ENCODE measurements at regions of chr3 and their contacts with region 1.

Region 1: DNA sequence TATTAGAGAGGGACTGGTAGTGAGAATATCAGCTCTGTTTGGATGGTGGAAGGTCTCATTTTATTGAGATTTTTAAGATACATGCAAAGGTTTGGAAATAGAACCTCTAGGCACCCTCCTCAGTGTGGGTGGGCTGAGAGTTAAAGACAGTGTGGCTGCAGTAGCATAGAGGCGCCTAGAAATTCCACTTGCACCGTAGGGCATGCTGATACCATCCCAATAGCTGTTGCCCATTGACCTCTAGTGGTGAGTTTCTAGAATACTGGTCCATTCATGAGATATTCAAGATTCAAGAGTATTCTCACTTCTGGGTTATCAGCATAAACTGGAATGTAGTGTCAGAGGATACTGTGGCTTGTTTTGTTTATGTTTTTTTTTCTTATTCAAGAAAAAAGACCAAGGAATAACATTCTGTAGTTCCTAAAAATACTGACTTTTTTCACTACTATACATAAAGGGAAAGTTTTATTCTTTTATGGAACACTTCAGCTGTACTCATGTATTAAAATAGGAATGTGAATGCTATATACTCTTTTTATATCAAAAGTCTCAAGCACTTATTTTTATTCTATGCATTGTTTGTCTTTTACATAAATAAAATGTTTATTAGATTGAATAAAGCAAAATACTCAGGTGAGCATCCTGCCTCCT is 87.2 kb downstream of the TGFBR2 start:
- DNase-seq: peak in 1 of 2 donors; percentile 59
- ATAC-seq: peak; percentile 76 to 88 (median 84)
- H3K4me3 ChIP-seq: no peak overlapping the region
- H3K27ac ChIP-seq: peak overlapping the region in 7 of 10 donors; percentile 8 to 64 (median 45)
- H3K4me1 ChIP-seq: peaks cover 11 to 94% (median 68%) of the 10 kb centered on the region in 9 donors
- H3K27me3 ChIP-seq: no peaks in the 10 kb centered on the region
- CTCF ChIP-seq: peak; percentile 70 to 90 (median 81)

Region 2: DNA sequence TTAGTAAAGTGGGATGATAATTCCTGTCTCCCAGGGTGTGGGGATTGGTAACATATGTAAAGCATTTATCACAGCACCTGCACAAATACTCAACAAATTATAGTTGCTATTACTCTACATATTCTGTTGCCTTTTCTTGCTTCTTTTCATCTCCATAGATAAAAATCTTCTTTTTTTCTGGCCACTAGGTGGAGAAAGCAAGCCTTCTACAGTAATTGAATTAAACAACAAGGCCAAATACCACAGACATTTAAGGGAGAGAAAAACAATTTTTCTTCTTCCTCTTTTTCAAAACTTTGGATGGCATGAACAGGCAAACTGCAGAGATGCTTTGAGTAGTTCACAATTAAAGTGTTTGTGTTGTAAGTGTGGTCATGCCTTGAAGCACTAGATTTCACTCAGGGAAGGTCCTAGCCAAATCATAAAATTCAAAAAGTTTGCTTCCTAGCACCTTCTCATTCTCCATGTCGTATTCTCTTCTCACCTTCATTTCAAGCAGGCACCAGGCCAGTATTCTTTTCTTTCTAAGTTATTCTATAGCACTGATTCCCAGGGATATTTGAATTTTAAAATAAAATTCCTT is 580.6 kb before region 1 on chr3:
- intact Hi-C with region 1: loop called (anchors 1 to 10 kb)
- DNase-seq: no peak
- ATAC-seq: peak in 5 of 8 donors; percentile 12 to 55 (median 44)
- H3K4me3 ChIP-seq: no peak overlapping the region
- H3K27ac ChIP-seq: no peak overlapping the region
- H3K4me1 ChIP-seq: peaks cover 0 to 20% (median 8%) of the 10 kb centered on the region in 9 donors
- H3K27me3 ChIP-seq: no peaks in the 10 kb centered on the region
- CTCF ChIP-seq: peak; percentile 42 to 81 (median 71)

Region 3: GRCh38 chr3:30292192-30292893 is 401.3 kb before region 1 on chr3:
- intact Hi-C with region 1: loop called in 2 of 10 experiments (anchors 5 to 10 kb)
- DNase-seq: no peak
- ATAC-seq: peak in 2 of 8 donors; percentile 51 to 54
- H3K4me3 ChIP-seq: no peak overlapping the region
- H3K27ac ChIP-seq: peak overlapping the region in 3 of 10 donors; percentile 10 to 70 (median 42)
- H3K4me1 ChIP-seq: peaks cover 0 to 49% (median 17%) of the 10 kb centered on the region in 9 donors
- H3K27me3 ChIP-seq: no peaks in the 10 kb centered on the region
- CTCF ChIP-seq: no peak

Region 4: DNA sequence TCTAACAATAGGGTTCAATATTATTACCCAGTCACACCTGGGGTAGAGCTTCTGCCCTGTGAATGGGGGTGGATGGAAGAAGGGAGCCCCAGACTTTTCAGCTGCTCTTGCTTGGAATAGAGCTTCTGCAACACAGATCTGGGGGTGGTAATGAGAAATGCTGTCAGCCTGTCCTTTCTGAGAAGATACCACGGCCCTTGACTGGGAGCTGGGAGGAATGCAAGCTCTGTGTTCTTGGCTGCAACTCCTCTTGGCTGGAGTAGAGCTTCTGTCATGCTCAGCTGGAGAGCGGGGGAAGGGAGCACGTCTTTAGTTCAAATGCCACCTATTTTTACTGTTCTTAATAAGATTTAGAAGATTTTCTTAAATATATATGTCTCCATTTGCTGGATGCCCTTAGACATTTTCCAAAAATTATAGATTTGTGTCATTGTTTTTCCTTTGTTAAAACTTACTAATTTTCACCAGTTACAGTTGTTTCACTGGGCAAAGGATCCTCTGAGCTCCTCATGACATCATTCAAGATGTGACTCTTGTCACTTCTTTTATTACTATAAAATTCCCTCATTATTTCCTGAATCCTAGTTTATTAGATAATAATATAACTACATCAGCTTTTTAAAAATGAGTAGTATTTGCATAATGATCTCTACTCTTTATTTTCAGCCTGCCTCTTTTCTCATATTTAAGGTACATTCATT is 267.2 kb before region 1 on chr3:
- intact Hi-C with region 1: loop called in 1 of 10 experiments (anchors 10 kb)
- DNase-seq: peak; percentile 26 to 85
- ATAC-seq: peak; percentile 98 to 100 (median 100)
- H3K4me3 ChIP-seq: no peak overlapping the region
- H3K27ac ChIP-seq: peak overlapping the region; percentile 36 to 85 (median 76)
- H3K4me1 ChIP-seq: peaks cover 0 to 21% (median 17%) of the 10 kb centered on the region in 9 donors
- H3K27me3 ChIP-seq: no peaks in the 10 kb centered on the region
- CTCF ChIP-seq: no peak

Region 5: GRCh38 chr3:30511524-30512278 is 181.9 kb before region 1 on chr3:
- intact Hi-C with region 1: loop called in 3 of 10 experiments (anchors 5 to 10 kb)
- DNase-seq: no peak
- ATAC-seq: peak; percentile 64 to 96 (median 83)
- H3K4me3 ChIP-seq: no peak overlapping the region
- H3K27ac ChIP-seq: peak overlapping the region in 8 of 10 donors; percentile 11 to 51 (median 30)
- H3K4me1 ChIP-seq: peaks cover 0 to 20% (median 0%) of the 10 kb centered on the region in 9 donors
- H3K27me3 ChIP-seq: no peaks in the 10 kb centered on the region
- CTCF ChIP-seq: no peak

Region 6: DNA sequence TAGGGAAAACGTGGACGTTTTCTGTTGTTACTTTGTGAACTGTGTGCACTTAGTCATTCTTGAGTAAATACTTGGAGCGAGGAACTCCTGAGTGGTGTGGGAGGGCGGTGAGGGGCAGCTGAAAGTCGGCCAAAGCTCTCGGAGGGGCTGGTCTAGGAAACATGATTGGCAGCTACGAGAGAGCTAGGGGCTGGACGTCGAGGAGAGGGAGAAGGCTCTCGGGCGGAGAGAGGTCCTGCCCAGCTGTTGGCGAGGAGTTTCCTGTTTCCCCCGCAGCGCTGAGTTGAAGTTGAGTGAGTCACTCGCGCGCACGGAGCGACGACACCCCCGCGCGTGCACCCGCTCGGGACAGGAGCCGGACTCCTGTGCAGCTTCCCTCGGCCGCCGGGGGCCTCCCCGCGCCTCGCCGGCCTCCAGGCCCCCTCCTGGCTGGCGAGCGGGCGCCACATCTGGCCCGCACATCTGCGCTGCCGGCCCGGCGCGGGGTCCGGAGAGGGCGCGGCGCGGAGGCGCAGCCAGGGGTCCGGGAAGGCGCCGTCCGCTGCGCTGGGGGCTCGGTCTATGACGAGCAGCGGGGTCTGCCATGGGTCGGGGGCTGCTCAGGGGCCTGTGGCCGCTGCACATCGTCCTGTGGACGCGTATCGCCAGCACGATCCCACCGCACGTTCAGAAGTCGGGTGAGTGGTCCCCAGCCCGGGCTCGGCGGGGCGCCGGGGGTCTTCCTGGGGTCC is 87.1 kb before region 1 on chr3 and contains the start of gene TGFBR2:
- intact Hi-C with region 1: loop called in 3 of 10 experiments (anchors 5 to 10 kb)
- DNase-seq: peak; percentile 94 to 96
- ATAC-seq: peak; percentile 95 to 98 (median 96)
- H3K4me3 ChIP-seq: peak within 1 kb of the TSS; percentile 66 to 98 (median 92)
- H3K27ac ChIP-seq: peak within 1 kb of the TSS; percentile 96 to 100 (median 99)
- H3K4me1 ChIP-seq: peaks cover 2 to 76% (median 45%) of the 10 kb centered on the region in 9 donors
- H3K27me3 ChIP-seq: no peaks in the 10 kb centered on the region
- CTCF ChIP-seq: peak in 6 of 9 donors; percentile 13 to 41 (median 32)
- total RNA-seq, gene TGFBR2: 71.1 to 197 (median 92.1) TPM

Region 7: DNA sequence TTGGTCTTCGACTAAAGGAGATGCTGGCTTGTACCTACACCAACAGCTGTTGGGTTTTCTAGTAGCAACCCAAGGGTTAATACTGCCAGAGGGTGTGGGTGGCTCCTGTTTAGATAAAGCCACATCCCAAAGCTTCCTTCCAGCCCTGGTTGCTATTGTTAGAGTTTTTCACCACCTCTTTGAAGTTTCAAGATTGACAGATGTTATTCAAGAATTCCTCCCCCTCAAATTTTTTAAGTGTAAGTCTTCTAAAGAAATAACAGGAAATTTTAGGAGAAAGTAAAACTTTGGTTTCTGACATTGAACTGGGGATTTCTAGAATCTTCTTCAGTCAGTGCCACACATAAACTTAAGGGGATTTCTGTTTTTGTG is 26.3 kb before region 1 on chr3:
- intact Hi-C with region 1: no loop called
- DNase-seq: no peak
- ATAC-seq: peak in 4 of 8 donors; percentile 38 to 52 (median 43)
- H3K4me3 ChIP-seq: no peak overlapping the region
- H3K27ac ChIP-seq: peak overlapping the region in 7 of 10 donors; percentile 10 to 62 (median 40)
- H3K4me1 ChIP-seq: peaks cover 0 to 81% (median 67%) of the 10 kb centered on the region in 9 donors
- H3K27me3 ChIP-seq: no peaks in the 10 kb centered on the region
- CTCF ChIP-seq: no peak

Measured in heart right ventricle (tissue), 16 donors.